Right ventricle myocardium inferior (tissue), 1 donor: ENCODE measurements at regions of chr7 and their contacts with region 1.

Region 1: DNA sequence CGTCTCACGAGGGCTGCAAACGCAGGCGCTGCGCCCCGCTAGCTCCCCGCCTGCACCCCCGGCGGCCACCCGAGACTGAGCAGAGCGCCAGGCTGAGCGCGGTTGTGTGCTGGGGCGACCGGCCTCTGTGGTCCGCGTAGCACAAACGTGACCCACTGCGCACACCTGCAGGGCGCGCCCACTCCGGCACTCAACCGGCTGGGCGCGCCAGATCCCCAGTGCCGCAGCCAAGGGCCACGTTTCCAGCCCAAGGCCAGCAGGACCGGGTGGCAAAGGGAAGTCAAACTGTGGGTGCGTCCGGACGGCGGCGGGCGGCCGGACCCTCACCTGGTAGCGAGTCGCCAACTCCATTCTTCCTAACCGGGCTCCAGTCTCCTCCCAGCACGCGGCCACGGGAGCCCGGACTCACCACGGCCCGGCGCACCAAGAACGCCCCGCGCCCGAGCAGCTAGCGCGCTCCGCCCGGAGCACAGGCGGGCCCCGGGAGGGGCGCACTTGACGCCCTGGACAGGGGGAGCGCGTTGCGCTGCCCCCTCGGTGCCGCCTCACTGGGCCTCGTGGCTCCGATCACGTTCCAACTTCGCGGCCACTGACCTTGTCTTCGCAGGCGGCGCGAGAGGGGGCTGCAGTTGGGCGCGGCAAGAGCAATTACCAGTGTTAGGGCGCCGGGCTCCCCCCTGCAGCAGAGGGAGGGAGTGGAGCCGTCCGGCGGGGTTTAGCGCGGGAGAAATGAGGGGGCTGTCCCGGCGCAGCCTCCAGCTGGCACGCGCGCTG is at the start of gene CDCA7L:
- DNase-seq: peak; percentile 90
- ATAC-seq: peak; percentile 95
- total RNA-seq, gene CDCA7L: 59.1 TPM

Region 2: DNA sequence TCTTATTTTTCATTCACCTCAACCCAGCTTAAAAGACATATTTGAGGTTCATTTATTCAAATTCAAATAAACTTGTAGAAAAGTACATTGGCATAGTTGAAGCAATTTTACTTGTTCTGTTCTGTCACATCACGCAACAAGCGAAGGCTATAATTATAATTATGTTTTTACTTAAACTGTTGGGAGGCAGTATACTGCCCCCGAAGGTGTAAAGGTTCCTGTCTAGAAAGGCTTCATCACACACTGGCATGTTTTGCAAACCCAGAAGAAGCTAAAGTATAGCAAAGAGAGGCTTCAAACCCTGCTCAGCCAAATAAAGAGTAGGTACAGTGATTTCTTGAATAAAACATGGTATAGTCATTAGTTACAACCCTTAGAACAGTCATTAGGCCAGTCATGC is 62.6 kb before region 1 on chr7:
- intact Hi-C with region 1: no loop called
- DNase-seq: no peak
- ATAC-seq: no peak

Region 3: GRCh38 chr7:21912305-21912704 is 33.3 kb before region 1 on chr7:
- intact Hi-C with region 1: loop called (anchors 2 kb)
- DNase-seq: no peak
- ATAC-seq: peak; percentile 67

Region 4: GRCh38 chr7:21923658-21924057 is 22.0 kb before region 1 on chr7:
- intact Hi-C with region 1: loop called (anchors 2 kb)
- DNase-seq: no peak
- ATAC-seq: peak; percentile 83

Region 5: GRCh38 chr7:22001345-22002004 is 55.8 kb after region 1 on chr7:
- intact Hi-C with region 1: no loop called
- DNase-seq: no peak
- ATAC-seq: no peak